GM23248 (cell line): ENCODE measurements at regions of chr4 and their contacts with region 1.

Region 1: DNA sequence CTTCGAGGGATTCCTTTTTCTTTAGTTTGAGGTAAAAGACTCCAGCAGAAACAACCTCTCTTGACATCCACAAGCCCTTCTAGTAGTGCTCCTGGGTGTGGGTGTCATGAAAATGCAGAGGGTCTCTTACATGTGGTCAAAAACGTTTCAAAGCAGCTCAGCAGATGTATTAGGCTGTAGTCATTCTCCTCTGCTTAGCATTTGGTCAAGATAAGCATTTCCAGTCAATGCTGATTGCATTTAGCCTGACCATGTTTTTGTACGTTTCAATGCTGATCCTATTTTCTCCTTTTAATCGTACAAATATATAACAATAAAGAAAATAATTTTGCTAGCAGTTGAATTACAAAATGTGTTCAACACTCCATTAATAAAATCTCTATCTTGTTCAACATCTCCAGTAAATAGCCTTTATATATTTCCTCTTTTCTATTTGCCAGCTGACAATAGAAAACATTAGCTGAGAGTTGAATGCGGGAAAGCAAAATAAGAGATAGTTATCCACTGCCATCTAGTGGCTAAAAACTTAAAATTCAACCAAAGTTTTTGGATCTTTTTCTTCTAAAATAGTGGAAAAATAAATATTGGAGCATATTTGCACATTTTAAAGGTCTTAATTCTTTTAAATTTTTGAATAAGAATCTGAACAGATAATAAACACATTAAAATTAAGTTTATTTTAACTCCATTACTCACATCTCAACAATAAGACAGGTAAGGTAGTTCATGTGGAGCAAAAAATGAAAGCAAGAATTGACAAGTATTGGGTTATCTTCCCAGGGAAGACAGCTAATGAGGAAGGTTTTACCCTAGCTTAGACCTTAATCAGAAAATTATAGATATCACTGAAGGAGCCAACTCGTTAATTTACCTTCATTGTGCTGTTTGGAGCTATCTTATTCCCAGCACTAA is 15.2 kb upstream of the PACRGL start:
- DNase-seq: peak; percentile 61
- H3K4me3 ChIP-seq: no peak overlapping the region
- H3K27ac ChIP-seq: no peak overlapping the region
- H3K4me1 ChIP-seq: peaks cover 6% of the 10 kb centered on the region
- H3K27me3 ChIP-seq: no peaks in the 10 kb centered on the region

Region 2: GRCh38 chr4:20313237-20314030 is 371.7 kb before region 1 on chr4:
- in situ Hi-C with region 1: loop called (anchors 25 kb)
- DNase-seq: no peak
- H3K4me3 ChIP-seq: no peak overlapping the region
- H3K27ac ChIP-seq: no peak overlapping the region
- H3K4me1 ChIP-seq: peaks cover 28% of the 10 kb centered on the region
- H3K27me3 ChIP-seq: no peaks in the 10 kb centered on the region

Region 3: DNA sequence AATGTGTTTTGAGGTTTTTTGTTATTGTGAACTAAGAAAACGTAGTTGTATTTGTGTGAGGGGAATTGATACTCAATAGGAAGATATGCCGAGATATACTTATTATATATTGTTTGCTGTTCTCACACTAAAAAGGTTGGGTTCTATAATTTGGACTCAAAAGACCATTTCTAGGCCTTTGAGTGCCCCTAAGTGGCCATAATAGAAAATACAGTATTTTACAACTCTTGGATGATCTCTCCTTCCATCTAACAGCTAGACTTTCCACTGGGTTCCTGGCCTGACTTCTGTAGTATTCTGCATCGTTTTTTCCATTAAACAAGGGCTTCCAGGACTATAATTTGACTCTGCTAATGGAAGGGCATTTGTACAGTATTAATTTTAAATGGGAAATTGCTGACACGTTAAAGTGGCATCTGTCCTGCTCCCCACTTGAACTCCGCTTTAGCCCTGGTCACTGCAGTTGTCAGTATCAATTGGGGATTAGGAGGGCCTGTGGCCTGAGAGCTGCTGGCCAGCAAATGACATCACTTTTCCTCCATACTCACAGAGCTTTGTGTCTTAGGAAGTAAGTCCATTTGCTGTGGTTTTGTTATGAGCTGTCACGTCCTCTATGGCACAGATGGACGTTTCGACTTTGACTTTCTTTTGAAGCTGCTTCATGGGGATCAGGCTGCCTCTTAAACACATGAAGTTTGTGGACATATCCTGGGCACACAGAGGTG is 256.5 kb before region 1 on chr4:
- in situ Hi-C with region 1: loop called (anchors 25 kb)
- DNase-seq: peak; percentile 51
- H3K4me3 ChIP-seq: no peak overlapping the region
- H3K27ac ChIP-seq: no peak overlapping the region
- H3K4me1 ChIP-seq: peaks cover 29% of the 10 kb centered on the region
- H3K27me3 ChIP-seq: no peaks in the 10 kb centered on the region

Region 4: GRCh38 chr4:21242163-21242562 is 557.1 kb after region 1 on chr4:
- in situ Hi-C with region 1: no loop called
- DNase-seq: no peak
- H3K4me3 ChIP-seq: no peak overlapping the region
- H3K27ac ChIP-seq: no peak overlapping the region
- H3K4me1 ChIP-seq: no peaks in the 10 kb centered on the region
- H3K27me3 ChIP-seq: no peaks in the 10 kb centered on the region